Activated CD8-positive, alpha-beta memory T cell treated with anti-CD3 and anti-CD28 coated beads, Interleukin-2, amount 10 ng/mL, durations not matched to agents 7 days and 5 days (primary cell): ENCODE measurements at regions of chr12 and their contacts with region 1.

Region 1: DNA sequence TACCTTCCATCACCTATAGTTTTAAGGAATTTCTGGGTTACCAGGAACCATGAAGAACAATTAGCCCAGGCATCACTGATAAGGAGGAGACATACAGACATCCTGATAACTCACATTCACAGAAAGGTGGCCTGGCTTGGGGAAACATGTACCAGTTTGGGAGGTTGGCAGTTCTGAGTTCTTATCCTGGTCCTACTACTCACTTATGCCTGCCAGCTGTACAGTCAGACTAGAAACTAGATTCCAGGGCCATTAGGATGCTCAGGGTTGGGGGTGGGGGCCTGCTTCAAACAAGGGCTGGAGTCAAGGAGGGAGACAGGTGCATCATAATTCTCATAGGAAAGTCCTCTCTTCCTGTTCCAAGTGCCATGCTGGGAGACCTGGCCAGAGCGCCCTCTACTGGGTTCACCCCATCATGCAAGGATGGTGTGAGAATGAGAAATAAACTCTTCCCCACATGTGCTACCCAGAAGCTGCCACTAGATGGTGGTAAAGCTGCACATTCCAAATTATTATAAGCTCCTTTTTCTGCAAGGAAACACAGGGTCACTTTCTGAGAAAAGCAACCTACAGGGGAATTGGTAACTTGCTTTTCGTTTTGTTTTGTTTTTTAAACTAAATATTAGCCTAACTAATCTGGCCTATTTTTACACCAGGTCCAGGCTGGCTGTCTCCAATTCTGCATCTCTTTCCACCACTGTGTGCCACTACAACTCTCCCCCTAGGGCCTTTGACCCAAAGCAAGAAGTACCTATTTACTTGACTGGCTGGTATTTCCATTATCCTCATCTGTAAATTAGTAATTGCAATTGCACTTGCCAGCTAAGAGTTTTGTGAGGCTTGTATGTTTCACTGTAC is 14.5 kb downstream of the OAS2 start:
- DNase-seq: peak; percentile 80
- ATAC-seq: peak; percentile 71
- H3K4me3 Mint-ChIP-seq: no peak overlapping the region
- H3K27ac Mint-ChIP-seq: peak overlapping the region; percentile 31
- H3K4me1 Mint-ChIP-seq: peaks cover 38% of the 10 kb centered on the region
- H3K27me3 Mint-ChIP-seq: no peaks in the 10 kb centered on the region

Region 2: GRCh38 chr12:112906712-112907414 is 85.9 kb before region 1 on chr12 and contains the start of gene OAS1:
- CTCF ChIA-PET with region 1: interaction called, 20 read pairs
- DNase-seq: peak; percentile 79
- ATAC-seq: peak; percentile 92
- H3K4me3 Mint-ChIP-seq: peak within 1 kb of the TSS; percentile 97
- H3K27ac Mint-ChIP-seq: peak within 1 kb of the TSS; percentile 97
- H3K4me1 Mint-ChIP-seq: peaks cover 72% of the 10 kb centered on the region
- H3K27me3 Mint-ChIP-seq: no peaks in the 10 kb centered on the region
- total RNA-seq, gene OAS1: 161 to 292 TPM

Region 3: GRCh38 chr12:112961074-112961473 is 31.7 kb before region 1 on chr12:
- CTCF ChIA-PET with region 1: interaction called, 21 read pairs
- DNase-seq: no peak
- ATAC-seq: peak; percentile 72
- H3K4me3 Mint-ChIP-seq: no peak overlapping the region
- H3K27ac Mint-ChIP-seq: peak overlapping the region; percentile 25
- H3K4me1 Mint-ChIP-seq: peaks cover 34% of the 10 kb centered on the region
- H3K27me3 Mint-ChIP-seq: no peaks in the 10 kb centered on the region

Region 4: GRCh38 chr12:113005754-113006153 is 13.0 kb after region 1 on chr12:
- CTCF ChIA-PET with region 1: interaction called, 47 read pairs
- DNase-seq: no peak
- ATAC-seq: no peak
- H3K4me3 Mint-ChIP-seq: no peak overlapping the region
- H3K27ac Mint-ChIP-seq: no peak overlapping the region
- H3K4me1 Mint-ChIP-seq: no peaks in the 10 kb centered on the region
- H3K27me3 Mint-ChIP-seq: no peaks in the 10 kb centered on the region

Region 5: GRCh38 chr12:113098446-113098896 is 105.7 kb after region 1 on chr12:
- CTCF ChIA-PET with region 1: no interaction called
- DNase-seq: peak; percentile 74
- ATAC-seq: peak; percentile 80
- H3K4me3 Mint-ChIP-seq: no peak overlapping the region
- H3K27ac Mint-ChIP-seq: no peak overlapping the region
- H3K4me1 Mint-ChIP-seq: peaks cover 5% of the 10 kb centered on the region
- H3K27me3 Mint-ChIP-seq: no peaks in the 10 kb centered on the region